Naive thymus-derived CD4-positive, alpha-beta T cell (primary cell): ENCODE measurements at regions of chr10 and their contacts with region 1.

Region 1: GRCh38 chr10:14604181-14605142 is 170.2 kb downstream of the FAM107B start:
- DNase-seq: peak; percentile 56 to 82 (median 65)
- ATAC-seq: peak; percentile 90
- H3K4me3 ChIP-seq: peak overlapping the region; percentile 40
- H3K4me3 Mint-ChIP-seq: peak overlapping the region; percentile 86 to 99 (median 97)
- H3K27ac ChIP-seq: peak overlapping the region; percentile 73
- H3K27ac Mint-ChIP-seq: peak overlapping the region; percentile 57 to 99 (median 94)
- H3K4me1 ChIP-seq: peaks cover 29 to 31% of the 10 kb centered on the region in 2 donors
- H3K4me1 Mint-ChIP-seq: peaks cover 45 to 62% (median 57%) of the 10 kb centered on the region in 7 donors
- H3K27me3 ChIP-seq: no peaks in the 10 kb centered on the region
- H3K27me3 Mint-ChIP-seq: peaks cover 0 to 2% (median 0%) of the 10 kb centered on the region in 5 donors

Region 2: GRCh38 chr10:14536241-14537213 is 67.9 kb before region 1 on chr10:
- CTCF ChIA-PET with region 1: interaction called, 4 read pairs
- POLR2A ChIA-PET with region 1: interaction called, 3 read pairs
- intact Hi-C with region 1: loop called in 1 of 2 experiments (anchors 2 kb)
- DNase-seq: peak in 3 of 9 donors; percentile 29 to 47 (median 31)
- ATAC-seq: peak; percentile 72
- H3K4me3 ChIP-seq: no peak overlapping the region
- H3K4me3 Mint-ChIP-seq: no peak overlapping the region
- H3K27ac ChIP-seq: no peak overlapping the region
- H3K27ac Mint-ChIP-seq: peak overlapping the region in 6 of 9 donors; percentile 31 to 83 (median 72)
- H3K4me1 ChIP-seq: peaks cover 4 to 31% of the 10 kb centered on the region in 2 donors
- H3K4me1 Mint-ChIP-seq: peaks cover 55 to 97% (median 90%) of the 10 kb centered on the region in 7 donors
- H3K27me3 ChIP-seq: no peaks in the 10 kb centered on the region
- H3K27me3 Mint-ChIP-seq: no peaks in the 10 kb centered on the region

Region 3: DNA sequence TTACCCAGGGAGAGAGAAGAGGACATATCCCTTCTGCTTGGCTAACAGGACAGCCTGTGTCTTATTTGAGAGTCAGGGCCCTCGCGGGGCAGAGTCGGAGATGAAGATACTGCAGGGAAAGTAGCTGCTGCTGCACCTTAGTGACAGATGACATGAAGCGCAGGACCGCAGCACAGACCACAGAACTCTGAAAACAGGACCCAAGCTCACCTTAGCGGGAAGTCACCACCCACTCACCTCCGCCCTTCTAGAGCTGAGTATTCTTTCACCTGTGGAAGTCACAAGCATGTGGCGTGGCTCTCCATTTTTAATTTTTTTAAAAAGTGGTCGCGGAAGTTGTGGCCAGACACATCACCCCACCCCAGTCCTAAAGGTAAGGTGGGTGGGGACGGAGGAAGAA is 21.2 kb before region 1 on chr10:
- CTCF ChIA-PET with region 1: interaction called, 3 read pairs
- POLR2A ChIA-PET with region 1: interaction called, 13 read pairs
- intact Hi-C with region 1: loop called (anchors 1 kb)
- DNase-seq: peak; percentile 47 to 92 (median 87)
- ATAC-seq: peak; percentile 79
- H3K4me3 ChIP-seq: peak overlapping the region; percentile 10
- H3K4me3 Mint-ChIP-seq: peak overlapping the region; percentile 76 to 90 (median 82)
- H3K27ac ChIP-seq: peak overlapping the region; percentile 83
- H3K27ac Mint-ChIP-seq: peak overlapping the region; percentile 96 to 100 (median 99)
- H3K4me1 ChIP-seq: peaks cover 75 to 77% of the 10 kb centered on the region in 2 donors
- H3K4me1 Mint-ChIP-seq: peaks cover 69 to 99% (median 92%) of the 10 kb centered on the region in 7 donors
- H3K27me3 ChIP-seq: no peaks in the 10 kb centered on the region
- H3K27me3 Mint-ChIP-seq: no peaks in the 10 kb centered on the region

Region 4: GRCh38 chr10:14648005-14648765 is 43.7 kb after region 1 on chr10:
- CTCF ChIA-PET with region 1: no interaction called
- POLR2A ChIA-PET with region 1: interaction called, 4 read pairs
- intact Hi-C with region 1: loop called (anchors 1 kb)
- DNase-seq: peak; percentile 55 to 93 (median 86)
- ATAC-seq: peak; percentile 91
- H3K4me3 ChIP-seq: peak overlapping the region; percentile 54
- H3K4me3 Mint-ChIP-seq: peak overlapping the region; percentile 77 to 98 (median 88)
- H3K27ac ChIP-seq: peak overlapping the region; percentile 98
- H3K27ac Mint-ChIP-seq: peak overlapping the region; percentile 95 to 100 (median 99)
- H3K4me1 ChIP-seq: peaks cover 25 to 31% of the 10 kb centered on the region in 2 donors
- H3K4me1 Mint-ChIP-seq: peaks cover 20 to 70% (median 61%) of the 10 kb centered on the region in 7 donors
- H3K27me3 ChIP-seq: no peaks in the 10 kb centered on the region
- H3K27me3 Mint-ChIP-seq: no peaks in the 10 kb centered on the region

Region 5: DNA sequence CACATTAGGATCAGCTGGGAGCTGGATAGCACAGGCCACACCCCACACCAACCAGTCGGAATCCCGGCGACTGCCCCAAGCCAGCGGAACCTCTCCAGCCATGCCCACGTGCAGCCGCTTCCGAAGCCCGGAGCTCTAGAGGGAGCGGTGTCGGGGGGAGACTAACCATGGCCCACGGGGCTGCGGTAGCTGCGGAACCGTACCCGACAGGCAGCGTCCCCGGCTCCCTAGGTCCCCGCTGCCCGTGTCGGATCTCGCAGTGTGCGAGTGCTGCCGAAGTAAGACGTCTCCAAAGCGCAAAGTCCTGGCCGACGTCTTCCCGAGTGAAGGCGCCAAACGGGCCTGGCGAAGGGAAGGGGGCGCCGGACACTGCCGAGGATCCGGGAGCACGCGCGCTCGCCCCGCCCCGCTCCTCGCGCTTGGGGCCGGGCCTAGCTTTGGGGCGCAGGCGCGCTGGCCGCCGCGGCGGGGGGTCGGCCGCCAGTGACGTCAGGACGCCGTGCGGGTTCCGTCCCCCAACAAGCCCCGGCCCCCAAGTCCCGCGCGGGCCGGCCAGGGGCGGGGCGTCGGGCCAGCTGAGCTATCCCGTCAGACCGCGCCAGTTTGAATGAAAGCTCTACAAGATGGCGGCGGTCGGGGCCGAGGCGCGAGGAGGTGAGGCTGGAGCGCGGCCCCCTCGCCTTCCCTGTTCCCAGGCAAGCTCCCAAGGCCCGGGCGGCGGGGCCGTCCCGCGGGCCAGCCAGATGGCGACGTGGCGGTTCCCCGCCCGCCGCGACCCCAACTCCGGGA is 274.0 kb after region 1 on chr10 and contains the start of gene SUV39H2:
- CTCF ChIA-PET with region 1: no interaction called
- POLR2A ChIA-PET with region 1: no interaction called
- intact Hi-C with region 1: loop called in 1 of 2 experiments (anchors 2 kb)
- DNase-seq: peak; percentile 81 to 97 (median 87)
- ATAC-seq: peak; percentile 93
- H3K4me3 ChIP-seq: peak within 1 kb of the TSS; percentile 92
- H3K4me3 Mint-ChIP-seq: peak within 1 kb of the TSS; percentile 92 to 97 (median 94)
- H3K27ac ChIP-seq: peak within 1 kb of the TSS; percentile 87
- H3K27ac Mint-ChIP-seq: peak within 1 kb of the TSS; percentile 71 to 94 (median 91)
- H3K4me1 ChIP-seq: peaks cover 4 to 7% of the 10 kb centered on the region in 2 donors
- H3K4me1 Mint-ChIP-seq: peaks cover 7 to 46% (median 41%) of the 10 kb centered on the region in 7 donors
- H3K27me3 ChIP-seq: no peaks in the 10 kb centered on the region
- H3K27me3 Mint-ChIP-seq: no peaks in the 10 kb centered on the region
- total RNA-seq, gene SUV39H2: 2.4 to 25.0 (median 6.8) TPM